Activated naive CD4-positive, alpha-beta T cell treated with anti-CD3 and anti-CD28 coated beads for 36 hours (primary cell): ENCODE measurements at regions of chr7 and their contacts with region 1.

Region 1: GRCh38 chr7:73718905-73719805 is at the start of gene STX1A:
- DNase-seq: peak; percentile 69
- H3K4me3 Mint-ChIP-seq: peak within 1 kb of the TSS; percentile 77
- H3K27ac Mint-ChIP-seq: no peak within 1 kb of the TSS
- H3K4me1 Mint-ChIP-seq: peaks cover 33% of the 10 kb centered on the region
- H3K27me3 Mint-ChIP-seq: peaks cover 2% of the 10 kb centered on the region
- total RNA-seq, gene STX1A: 23.7 to 24.1 TPM

Region 2: DNA sequence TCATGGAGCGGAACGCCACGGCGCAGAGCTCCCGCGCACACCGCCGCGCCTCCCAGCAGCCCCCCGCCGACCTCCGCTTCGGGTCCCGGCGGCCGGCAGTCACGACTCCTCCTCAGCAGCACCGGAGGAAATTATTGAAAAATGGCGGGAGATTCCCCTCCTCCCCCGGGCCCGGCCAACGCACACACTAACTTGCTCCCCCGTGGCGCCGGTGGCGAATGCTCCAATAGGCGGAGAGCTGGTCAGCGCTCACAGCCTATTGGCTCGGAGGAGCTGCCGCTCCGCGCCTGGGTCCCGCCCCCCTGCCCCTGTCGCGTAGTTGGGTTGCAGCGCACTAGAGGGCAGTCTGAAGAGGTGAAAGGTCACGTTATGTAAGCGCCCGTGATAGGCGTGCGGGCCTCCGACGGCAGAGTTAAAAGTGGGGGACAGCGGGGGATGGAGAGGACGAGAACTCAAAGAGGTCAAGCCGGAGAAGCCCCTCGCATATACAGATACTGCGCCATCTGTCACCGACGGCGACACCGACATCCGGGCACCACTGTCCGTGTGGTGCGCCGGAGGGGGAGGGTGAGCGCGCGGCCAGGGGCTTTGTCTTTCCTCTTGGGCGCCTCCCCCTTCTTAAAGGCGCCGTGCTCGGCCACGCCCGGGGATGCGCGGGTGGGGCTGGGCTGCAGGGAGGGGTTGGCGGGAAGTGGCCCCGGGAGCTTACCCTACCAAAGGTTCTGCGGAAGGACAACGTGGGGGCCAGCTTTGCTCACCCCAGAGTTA is 196.9 kb before region 1 on chr7 and contains the start of gene BAZ1B:
- CTCF ChIA-PET with region 1: no interaction called
- intact Hi-C with region 1: loop called (anchors 2 kb)
- DNase-seq: peak; percentile 99
- H3K4me3 Mint-ChIP-seq: peak within 1 kb of the TSS; percentile 98
- H3K27ac Mint-ChIP-seq: peak within 1 kb of the TSS; percentile 96
- H3K4me1 Mint-ChIP-seq: peaks cover 55% of the 10 kb centered on the region
- H3K27me3 Mint-ChIP-seq: no peaks in the 10 kb centered on the region
- total RNA-seq, gene BAZ1B: 67.6 to 69.9 TPM

Region 3: DNA sequence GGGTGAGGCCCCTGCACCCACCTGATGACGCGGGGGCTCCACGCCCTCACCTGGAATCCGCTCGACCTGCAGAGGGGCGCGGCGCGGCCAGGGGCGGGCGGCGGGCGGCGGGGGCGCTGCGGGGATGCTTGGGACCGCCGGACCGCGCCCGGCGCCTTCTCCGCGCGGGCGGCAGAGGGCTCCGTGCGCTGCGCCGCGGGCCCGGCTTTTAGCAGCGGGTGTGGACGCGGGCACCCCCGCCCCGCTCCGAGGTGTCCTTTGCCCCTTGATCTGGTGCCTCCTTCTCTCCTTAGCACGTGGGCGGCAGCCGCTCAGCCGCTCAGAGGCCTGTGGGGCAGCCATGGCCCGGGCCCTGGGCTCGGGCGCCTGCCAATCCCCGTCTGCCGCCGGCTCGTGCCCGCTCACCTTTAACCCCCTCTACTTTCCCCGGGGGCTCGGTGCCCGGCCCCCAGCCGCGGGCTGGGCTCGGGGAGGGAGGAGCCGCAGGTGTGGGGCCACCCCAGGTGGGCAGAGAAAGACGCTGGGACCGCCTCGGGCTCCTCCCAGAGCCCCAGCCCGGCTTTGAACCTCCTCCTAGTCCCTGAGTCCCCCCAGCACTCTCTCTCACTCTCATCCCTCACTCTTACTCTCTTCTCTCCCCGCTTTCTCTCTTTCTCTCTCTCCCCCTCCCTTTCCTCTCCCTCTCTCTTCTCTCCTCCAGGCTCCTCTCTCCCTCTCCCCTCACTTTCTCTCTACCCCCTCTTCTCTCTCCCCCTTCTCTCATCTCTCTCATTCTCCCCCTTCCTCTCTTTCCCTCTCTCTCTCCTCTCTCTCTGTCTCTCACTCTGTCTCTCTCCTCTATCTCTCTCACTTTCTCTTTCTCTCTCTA is 71.2 kb before region 1 on chr7:
- CTCF ChIA-PET with region 1: no interaction called
- intact Hi-C with region 1: loop called (anchors 5 kb)
- DNase-seq: peak; percentile 30
- H3K4me3 Mint-ChIP-seq: peak overlapping the region; percentile 33
- H3K27ac Mint-ChIP-seq: no peak overlapping the region
- H3K4me1 Mint-ChIP-seq: peaks cover 11% of the 10 kb centered on the region
- H3K27me3 Mint-ChIP-seq: peaks cover 50% of the 10 kb centered on the region

Region 4: GRCh38 chr7:73683056-73683964 is 35.8 kb before region 1 on chr7 and contains the starts of genes BUD23 and DNAJC30:
- CTCF ChIA-PET with region 1: interaction called, 4 read pairs
- intact Hi-C with region 1: loop called (anchors 1 kb)
- DNase-seq: peak; percentile 99
- H3K4me3 Mint-ChIP-seq: peak within 1 kb of the TSS; percentile 98
- H3K27ac Mint-ChIP-seq: peak within 1 kb of the TSS; percentile 91
- H3K4me1 Mint-ChIP-seq: peaks cover 47% of the 10 kb centered on the region
- H3K27me3 Mint-ChIP-seq: no peaks in the 10 kb centered on the region
- total RNA-seq, gene BUD23: 95.1 to 110 TPM
- total RNA-seq, gene DNAJC30: 4.2 to 4.4 TPM

Region 5: DNA sequence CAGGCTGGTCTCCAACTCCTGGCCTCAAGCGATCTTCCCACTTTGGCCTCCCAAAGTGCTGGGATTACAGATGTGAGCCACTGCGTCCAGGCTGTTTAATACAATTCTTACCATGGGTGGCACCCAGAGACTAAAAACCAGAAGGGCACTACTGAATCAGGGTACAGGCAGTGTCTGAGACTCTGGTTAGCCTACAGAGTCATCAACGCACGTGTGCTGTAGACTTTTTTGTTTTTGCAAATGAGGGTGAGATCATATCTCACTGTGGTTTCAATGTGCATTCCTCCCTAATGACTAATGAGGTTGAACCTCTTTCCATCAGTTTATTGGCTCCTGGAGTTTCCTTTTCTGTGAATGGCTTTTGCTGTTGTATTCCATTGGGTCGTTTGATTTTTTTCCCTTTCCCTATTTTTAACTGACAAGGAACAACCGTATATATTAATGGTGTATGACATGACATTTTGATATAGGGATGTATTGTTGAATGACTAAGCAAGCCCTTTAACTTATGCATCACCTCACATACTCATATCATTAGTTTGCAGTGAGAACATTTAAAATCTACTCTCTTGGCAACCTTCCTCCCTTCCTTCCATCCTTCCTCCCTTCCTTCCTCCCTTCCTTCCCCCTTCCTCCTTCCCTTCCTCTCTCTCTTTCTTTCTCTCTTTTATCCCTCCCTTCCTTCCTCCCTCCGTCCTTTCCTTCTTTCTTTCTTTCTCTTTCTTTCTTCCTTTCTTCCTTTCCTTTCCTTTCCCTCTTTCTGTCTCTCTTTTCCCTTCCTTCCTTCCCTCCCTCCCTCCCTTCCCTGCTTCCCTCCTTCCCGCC is 132.5 kb after region 1 on chr7:
- CTCF ChIA-PET with region 1: no interaction called
- intact Hi-C with region 1: loop called (anchors 1 kb)
- DNase-seq: peak; percentile 60
- H3K4me3 Mint-ChIP-seq: no peak overlapping the region
- H3K27ac Mint-ChIP-seq: peak overlapping the region; percentile 53
- H3K4me1 Mint-ChIP-seq: peaks cover 30% of the 10 kb centered on the region
- H3K27me3 Mint-ChIP-seq: peaks cover 14% of the 10 kb centered on the region

Region 6: GRCh38 chr7:73971704-73972341 is 252.7 kb after region 1 on chr7:
- CTCF ChIA-PET with region 1: no interaction called
- intact Hi-C with region 1: no loop called
- DNase-seq: no peak
- H3K4me3 Mint-ChIP-seq: no peak overlapping the region
- H3K27ac Mint-ChIP-seq: no peak overlapping the region
- H3K4me1 Mint-ChIP-seq: no peaks in the 10 kb centered on the region
- H3K27me3 Mint-ChIP-seq: no peaks in the 10 kb centered on the region